ENCODE measurements at regions of chrX and their contacts with region 1.

Region 1: GRCh38 chrX:79270401-79270800 is 96.7 kb downstream of the ITM2A start:
- DNase-seq: peak; percentile 68 to 77 (median 71)
- H3K4me3 ChIP-seq: no peak overlapping the region
- H3K4me3 Mint-ChIP-seq: peak overlapping the region; percentile 3 to 73 (median 22)
- H3K27ac ChIP-seq: peak overlapping the region; percentile 15
- H3K27ac Mint-ChIP-seq: peak overlapping the region; percentile 42 to 91 (median 64)
- H3K4me1 ChIP-seq: peaks cover 61% of the 10 kb centered on the region
- H3K4me1 Mint-ChIP-seq: peaks cover 27 to 49% (median 34%) of the 10 kb centered on the region in 4 donors
- H3K27me3 ChIP-seq: no peaks in the 10 kb centered on the region
- H3K27me3 Mint-ChIP-seq: no peaks in the 10 kb centered on the region

Region 2: DNA sequence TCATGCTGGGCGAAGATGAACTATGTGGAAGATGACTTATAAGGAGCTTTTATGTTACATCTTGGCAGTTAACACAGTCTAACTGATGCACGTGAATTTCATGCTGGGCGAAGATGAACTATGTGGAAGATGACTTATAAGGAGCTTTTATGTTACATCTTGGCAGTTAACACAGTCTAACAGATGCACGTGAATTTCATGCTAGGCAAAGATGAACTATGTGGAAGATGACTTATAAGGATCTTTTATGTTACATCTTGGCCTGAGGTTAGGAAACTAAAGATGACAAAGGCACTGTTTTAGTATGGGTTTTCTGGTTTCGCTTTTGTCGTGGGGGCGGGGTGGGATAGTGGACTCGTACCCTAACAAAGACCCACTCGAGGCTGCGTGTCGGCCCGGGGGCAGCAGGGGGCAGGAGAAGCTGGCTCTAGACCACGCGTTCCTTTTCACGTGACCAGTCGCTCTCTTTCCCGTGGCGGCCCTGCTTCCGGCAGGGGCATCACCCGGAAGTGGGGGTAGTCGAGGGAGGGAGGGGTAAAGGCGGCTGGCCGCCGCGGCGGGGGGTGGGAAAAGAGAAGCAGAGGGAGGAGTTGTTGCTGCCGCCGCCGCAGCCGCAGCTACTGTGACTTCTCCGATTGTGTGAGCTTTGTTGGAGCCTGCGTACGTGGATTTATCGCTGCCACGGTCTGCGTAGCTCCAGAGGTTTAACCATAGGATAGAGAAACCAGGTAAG is 1360.1 kb before region 1 on chrX and contains the start of gene ATP7A:
- CTCF ChIA-PET with region 1: no interaction called
- POLR2A ChIA-PET with region 1: no interaction called
- intact Hi-C with region 1: loop called (anchors 2 kb)
- DNase-seq: peak; percentile 85 to 95 (median 91)
- H3K4me3 ChIP-seq: peak within 1 kb of the TSS; percentile 55 to 78
- H3K4me3 Mint-ChIP-seq: peak within 1 kb of the TSS; percentile 93 to 100 (median 96)
- H3K27ac ChIP-seq: peak within 1 kb of the TSS; percentile 82
- H3K27ac Mint-ChIP-seq: peak within 1 kb of the TSS; percentile 93 to 99 (median 98)
- H3K4me1 ChIP-seq: peaks cover 19% of the 10 kb centered on the region
- H3K4me1 Mint-ChIP-seq: peaks cover 10 to 31% (median 17%) of the 10 kb centered on the region in 4 donors
- H3K27me3 ChIP-seq: no peaks in the 10 kb centered on the region
- H3K27me3 Mint-ChIP-seq: no peaks in the 10 kb centered on the region
- total RNA-seq, gene ATP7A: 15.3 to 16.8 TPM

Region 3: GRCh38 chrX:78886550-78886949 is 383.9 kb before region 1 on chrX:
- CTCF ChIA-PET with region 1: interaction called, 4 read pairs
- POLR2A ChIA-PET with region 1: no interaction called
- intact Hi-C with region 1: loop called (anchors 1 kb)
- DNase-seq: peak in 4 of 5 donors; percentile 5 to 27 (median 10)
- H3K4me3 ChIP-seq: no peak overlapping the region
- H3K4me3 Mint-ChIP-seq: peak overlapping the region in 1 of 8 donors; percentile 50
- H3K27ac ChIP-seq: no peak overlapping the region
- H3K27ac Mint-ChIP-seq: peak overlapping the region in 2 of 7 donors; percentile 43 to 59
- H3K4me1 ChIP-seq: no peaks in the 10 kb centered on the region
- H3K4me1 Mint-ChIP-seq: peaks cover 4 to 10% (median 6%) of the 10 kb centered on the region in 4 donors
- H3K27me3 ChIP-seq: no peaks in the 10 kb centered on the region
- H3K27me3 Mint-ChIP-seq: no peaks in the 10 kb centered on the region

Region 4: GRCh38 chrX:79081895-79082512 is 188.4 kb before region 1 on chrX:
- CTCF ChIA-PET with region 1: interaction called, 15 read pairs
- POLR2A ChIA-PET with region 1: interaction called, 17 read pairs
- intact Hi-C with region 1: loop called (anchors 1 kb)
- DNase-seq: peak; percentile 43 to 72 (median 65)
- H3K4me3 ChIP-seq: peak overlapping the region; percentile 6 to 32
- H3K4me3 Mint-ChIP-seq: peak overlapping the region; percentile 51 to 82 (median 78)
- H3K27ac ChIP-seq: peak overlapping the region; percentile 31
- H3K27ac Mint-ChIP-seq: peak overlapping the region; percentile 77 to 94 (median 90)
- H3K4me1 ChIP-seq: peaks cover 40% of the 10 kb centered on the region
- H3K4me1 Mint-ChIP-seq: peaks cover 16 to 37% (median 25%) of the 10 kb centered on the region in 4 donors
- H3K27me3 ChIP-seq: no peaks in the 10 kb centered on the region
- H3K27me3 Mint-ChIP-seq: no peaks in the 10 kb centered on the region

Region 5: GRCh38 chrX:79153348-79153747 is 117.1 kb before region 1 on chrX:
- CTCF ChIA-PET with region 1: interaction called, 5 read pairs
- POLR2A ChIA-PET with region 1: interaction called, 49 read pairs
- intact Hi-C with region 1: no loop called
- DNase-seq: no peak
- H3K4me3 ChIP-seq: peak overlapping the region; percentile 34 to 42
- H3K4me3 Mint-ChIP-seq: peak overlapping the region; percentile 57 to 93 (median 84)
- H3K27ac ChIP-seq: peak overlapping the region; percentile 71
- H3K27ac Mint-ChIP-seq: peak overlapping the region; percentile 83 to 97 (median 93)
- H3K4me1 ChIP-seq: peaks cover 94% of the 10 kb centered on the region
- H3K4me1 Mint-ChIP-seq: peaks cover 34 to 81% (median 42%) of the 10 kb centered on the region in 4 donors
- H3K27me3 ChIP-seq: no peaks in the 10 kb centered on the region
- H3K27me3 Mint-ChIP-seq: no peaks in the 10 kb centered on the region

Region 6: DNA sequence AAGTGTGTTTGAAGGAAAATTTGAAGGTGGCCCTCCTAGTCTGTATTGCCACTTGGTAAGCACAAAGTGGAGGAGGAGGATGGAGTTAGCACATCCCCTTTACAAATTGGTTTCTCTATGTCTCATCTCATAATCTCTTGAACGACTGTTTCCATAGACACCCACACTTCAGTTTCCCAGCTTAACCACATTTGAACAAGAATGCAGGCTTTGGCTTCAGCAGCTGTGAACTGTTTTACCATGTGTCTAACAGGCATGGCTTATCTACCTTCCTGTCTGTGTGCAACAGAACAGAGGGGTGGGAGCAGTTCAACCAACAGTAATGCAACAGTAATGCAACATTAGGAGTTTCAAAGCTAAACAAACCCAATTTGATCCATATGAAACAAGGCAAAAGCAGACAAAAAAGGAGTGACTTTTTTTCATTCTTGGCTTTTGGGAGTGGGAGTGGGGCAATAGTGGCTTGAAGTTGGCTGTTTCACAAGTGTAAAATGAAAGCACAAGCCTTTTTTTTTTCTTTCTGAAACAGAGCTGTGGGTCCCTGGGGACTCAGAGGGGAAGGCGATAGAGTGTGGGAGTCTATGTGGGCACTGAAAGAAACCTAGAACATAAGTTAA is 11.2 kb before region 1 on chrX:
- CTCF ChIA-PET with region 1: interaction called, 4 read pairs
- POLR2A ChIA-PET with region 1: interaction called, 22 read pairs
- intact Hi-C with region 1: no loop called
- DNase-seq: peak; percentile 71 to 82 (median 77)
- H3K4me3 ChIP-seq: no peak overlapping the region
- H3K4me3 Mint-ChIP-seq: peak overlapping the region; percentile 46 to 87 (median 66)
- H3K27ac ChIP-seq: peak overlapping the region; percentile 58
- H3K27ac Mint-ChIP-seq: peak overlapping the region; percentile 86 to 96 (median 94)
- H3K4me1 ChIP-seq: peaks cover 89% of the 10 kb centered on the region
- H3K4me1 Mint-ChIP-seq: peaks cover 51 to 86% (median 68%) of the 10 kb centered on the region in 4 donors
- H3K27me3 ChIP-seq: no peaks in the 10 kb centered on the region
- H3K27me3 Mint-ChIP-seq: no peaks in the 10 kb centered on the region

Region 7: DNA sequence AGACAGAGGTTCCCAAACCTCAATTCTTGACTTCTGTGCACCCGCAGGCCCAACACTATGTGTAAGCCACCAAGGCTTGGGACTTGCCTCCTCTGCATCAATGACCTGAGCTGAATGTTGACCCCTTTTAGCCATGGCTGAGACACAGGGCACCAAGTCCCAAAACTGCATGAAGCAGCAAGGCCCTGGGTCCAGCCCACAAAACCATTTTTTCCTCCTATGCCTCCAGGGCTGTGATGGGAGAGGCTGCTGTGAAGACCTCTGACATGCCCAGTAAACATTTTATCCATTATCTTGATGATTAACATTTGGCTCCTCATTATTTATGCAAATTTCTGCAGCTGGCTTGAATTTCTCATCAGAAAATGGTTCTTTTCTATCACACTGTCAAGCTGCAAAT is 11.4 kb after region 1 on chrX:
- CTCF ChIA-PET with region 1: no interaction called
- POLR2A ChIA-PET with region 1: no interaction called
- intact Hi-C with region 1: no loop called
- DNase-seq: no peak
- H3K4me3 ChIP-seq: no peak overlapping the region
- H3K4me3 Mint-ChIP-seq: no peak overlapping the region
- H3K27ac ChIP-seq: no peak overlapping the region
- H3K27ac Mint-ChIP-seq: no peak overlapping the region
- H3K4me1 ChIP-seq: no peaks in the 10 kb centered on the region
- H3K4me1 Mint-ChIP-seq: peaks cover 0 to 1% (median 0%) of the 10 kb centered on the region in 4 donors
- H3K27me3 ChIP-seq: no peaks in the 10 kb centered on the region
- H3K27me3 Mint-ChIP-seq: no peaks in the 10 kb centered on the region

Region 8: GRCh38 chrX:79412972-79413371 is 142.6 kb after region 1 on chrX:
- CTCF ChIA-PET with region 1: interaction called, 12 read pairs
- POLR2A ChIA-PET with region 1: interaction called, 9 read pairs
- intact Hi-C with region 1: loop called (anchors 1 kb)
- DNase-seq: peak in 4 of 5 donors; percentile 48 to 54 (median 50)
- H3K4me3 ChIP-seq: peak overlapping the region; percentile 23 to 34
- H3K4me3 Mint-ChIP-seq: peak overlapping the region; percentile 71 to 84 (median 82)
- H3K27ac ChIP-seq: peak overlapping the region; percentile 56
- H3K27ac Mint-ChIP-seq: peak overlapping the region; percentile 41 to 88 (median 82)
- H3K4me1 ChIP-seq: peaks cover 7% of the 10 kb centered on the region
- H3K4me1 Mint-ChIP-seq: peaks cover 18 to 35% (median 22%) of the 10 kb centered on the region in 4 donors
- H3K27me3 ChIP-seq: no peaks in the 10 kb centered on the region
- H3K27me3 Mint-ChIP-seq: no peaks in the 10 kb centered on the region

Measured in CD4-positive, alpha-beta memory T cell (primary cell).